GM12878 (cell line): ENCODE measurements at regions of chr13 and their contacts with region 1.

Region 1: GRCh38 chr13:113897161-113897560 is 33.3 kb upstream of the GAS6 start:
- DNase-seq: no peak
- ATAC-seq: no peak
- H3K4me3 ChIP-seq: no peak overlapping the region
- H3K27ac ChIP-seq: no peak overlapping the region
- H3K4me1 ChIP-seq: no peaks in the 10 kb centered on the region
- H3K27me3 ChIP-seq: 0 out of 4 replicates have a peak, but pooled peaks cover 0 to 2% of the 10 kb centered on the region in 2 experiments
- CTCF ChIP-seq: no peak
- EP300 ChIP-seq: no peak
- POLR2A ChIP-seq: no peak
- RAD21 ChIP-seq: no peak

Region 2: GRCh38 chr13:113837554-113838355 is 59.4 kb before region 1 on chr13:
- CTCF ChIA-PET with region 1: no interaction called
- POLR2A ChIA-PET with region 1: no interaction called
- RAD21 ChIA-PET with region 1: no interaction called
- SMC1A ChIA-PET with region 1: no interaction called
- in situ Hi-C with region 1: loop called (anchors 10 kb)
- intact Hi-C with region 1: no loop called
- DNase-seq: no peak
- ATAC-seq: peak; percentile 59
- H3K4me3 ChIP-seq: no peak overlapping the region
- H3K27ac ChIP-seq: no peak overlapping the region
- H3K4me1 ChIP-seq: no peaks in the 10 kb centered on the region
- H3K27me3 ChIP-seq: no peaks in the 10 kb centered on the region
- CTCF ChIP-seq: no peak
- EP300 ChIP-seq: no peak
- POLR2A ChIP-seq: no peak
- RAD21 ChIP-seq: no peak